Posterior cingulate gyrus (tissue), 11 donors: ENCODE measurements at regions of chr5 and their contacts with region 1.

Region 1: GRCh38 chr5:167049043-167049663 is 1242.3 kb upstream of the WWC1 start:
- DNase-seq: peak in 1 of 10 donors; percentile 21

Region 2: DNA sequence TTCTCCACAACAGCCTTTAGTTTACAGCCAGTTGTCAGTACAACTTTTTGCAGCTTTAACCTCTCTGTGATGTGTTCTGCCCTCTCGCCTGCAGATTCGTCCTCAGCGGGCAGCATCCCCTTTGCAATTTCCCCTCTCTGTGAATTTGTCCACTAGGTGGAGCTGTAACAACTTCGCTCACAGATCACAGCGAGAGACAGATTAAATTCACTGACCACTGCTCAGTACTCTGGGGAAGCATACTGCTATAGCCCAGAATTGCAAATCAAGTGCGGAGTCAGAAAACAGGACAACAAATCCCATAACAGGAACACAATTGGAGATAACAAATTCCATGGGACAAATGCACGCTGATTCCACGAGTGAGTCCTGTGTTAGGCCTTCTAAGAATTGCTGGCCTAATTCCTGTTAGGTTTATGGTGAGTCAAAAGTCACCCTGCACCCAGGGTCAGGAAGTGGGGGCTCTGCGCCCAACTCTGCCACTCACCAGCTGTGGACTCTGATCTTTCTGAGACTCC is 1418.8 kb before region 1 on chr5:
- intact Hi-C with region 1: loop called (anchors 5 kb)
- DNase-seq: peak in 8 of 10 donors; percentile 15 to 83 (median 58)

Region 3: GRCh38 chr5:166505544-166505943 is 543.6 kb before region 1 on chr5:
- intact Hi-C with region 1: no loop called
- DNase-seq: no peak

Region 4: DNA sequence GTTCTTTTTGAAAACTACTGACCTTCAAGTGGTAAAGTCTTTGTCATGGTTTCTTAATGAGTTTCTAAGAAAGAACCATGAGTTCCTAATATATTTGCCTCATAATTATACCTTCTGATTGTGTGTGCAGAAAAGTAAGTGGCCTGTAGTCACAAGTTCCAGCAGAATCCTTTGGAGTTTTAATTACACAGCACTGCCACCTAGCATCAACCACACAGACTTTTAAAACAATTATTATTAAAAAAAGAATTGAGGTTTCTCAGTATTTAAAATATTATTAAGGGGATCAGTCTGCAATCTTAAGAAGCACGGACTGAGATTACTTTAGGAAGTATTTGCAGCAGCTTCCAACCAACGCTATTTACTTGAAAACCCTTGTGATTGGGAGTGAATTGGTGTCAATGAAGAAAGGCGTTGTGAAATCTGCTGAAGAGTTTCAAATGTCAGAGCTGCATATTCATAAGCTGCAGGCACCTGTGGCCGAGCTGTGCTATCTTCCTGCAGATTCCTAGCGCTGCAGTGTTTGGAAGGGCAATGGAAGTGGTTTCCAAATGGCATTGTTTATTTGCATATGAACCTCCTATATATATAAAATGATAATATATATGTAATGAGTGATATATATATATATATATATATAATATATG is 168.1 kb after region 1 on chr5:
- intact Hi-C with region 1: no loop called
- DNase-seq: no peak